ENCODE measurements at regions of chr14 and their contacts with region 1.

Region 1: DNA sequence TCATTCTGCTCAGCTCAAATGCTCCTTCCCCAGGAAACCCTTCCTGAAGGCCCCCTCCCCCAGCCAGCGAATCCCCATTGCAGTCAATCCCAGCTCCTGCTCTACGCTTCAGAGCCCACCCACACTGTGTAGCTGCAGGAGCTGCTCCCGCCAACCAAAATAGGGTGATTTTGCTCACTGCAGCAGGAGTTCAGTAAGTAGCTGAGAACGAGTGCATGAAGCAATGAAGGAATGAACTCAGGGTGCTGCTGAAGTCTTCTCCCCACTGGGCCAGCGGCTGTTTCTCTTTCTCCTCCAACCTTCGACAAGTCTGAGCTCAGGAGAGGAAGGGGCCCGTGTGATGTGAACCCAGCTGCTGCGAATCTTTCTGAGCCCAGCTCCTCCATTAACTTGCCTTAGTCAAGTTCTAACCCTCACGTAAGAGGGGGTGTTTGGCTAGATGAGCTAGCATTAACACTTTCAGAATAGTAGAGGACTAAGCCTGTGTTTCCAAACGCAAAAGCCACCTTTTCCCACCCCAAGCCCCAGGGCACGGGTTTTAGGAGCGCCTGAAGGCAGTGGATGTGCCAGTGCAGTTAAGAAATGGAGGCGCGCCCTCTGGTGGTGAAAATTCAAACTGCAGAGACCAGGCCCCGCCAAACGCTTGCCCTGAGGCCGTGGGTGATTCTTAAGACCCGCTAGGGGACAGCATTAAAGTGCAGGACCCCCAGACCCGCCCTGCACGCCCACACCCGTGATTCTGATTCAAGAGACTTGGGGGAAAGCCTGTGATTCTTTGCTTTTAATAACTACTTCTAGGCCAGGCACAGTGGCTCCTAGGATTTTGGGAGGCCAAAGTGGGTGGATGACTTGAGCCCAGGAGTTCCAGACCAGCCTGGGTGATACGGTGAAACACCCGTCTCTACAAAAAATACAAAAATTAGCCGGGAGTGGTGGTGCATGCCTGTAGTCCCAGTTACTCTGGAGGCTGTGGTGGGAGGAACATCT is 11.9 kb upstream of the SERPINA4 start:
- DNase-seq: peak; percentile 44 to 62
- ATAC-seq: peak; percentile 87 to 98
- H3K4me3 ChIP-seq: no peak overlapping the region
- H3K27ac ChIP-seq: peak overlapping the region; percentile 5 to 65; a peak in 2 of 6 replicates
- H3K4me1 ChIP-seq: no peaks in the 10 kb centered on the region
- CTCF ChIP-seq: peak; percentile 83
- EP300 ChIP-seq: no peak
- POLR2A ChIP-seq: no peak
- RAD21 ChIP-seq: peak; percentile 63 to 69

Region 2: GRCh38 chr14:94395888-94396574 is 153.3 kb before region 1 on chr14:
- CTCF ChIA-PET with region 1: no interaction called
- POLR2A ChIA-PET with region 1: no interaction called
- DNase-seq: peak in 1 of 2 experiments; percentile 17
- ATAC-seq: peak in 1 of 2 experiments; percentile 42; a peak in 2 of 6 replicates
- H3K4me3 ChIP-seq: no peak overlapping the region
- H3K27ac ChIP-seq: no peak overlapping the region
- H3K4me1 ChIP-seq: no peaks in the 10 kb centered on the region
- CTCF ChIP-seq: no peak
- EP300 ChIP-seq: no peak
- POLR2A ChIP-seq: no peak
- RAD21 ChIP-seq: no peak

Region 3: GRCh38 chr14:94536823-94537222 is 12.5 kb before region 1 on chr14:
- CTCF ChIA-PET with region 1: interaction called, 24 read pairs
- POLR2A ChIA-PET with region 1: interaction called, 3 read pairs
- DNase-seq: peak in 1 of 2 experiments; percentile 65
- ATAC-seq: peak in 1 of 2 experiments; percentile 83; a peak in 3 of 6 replicates
- H3K4me3 ChIP-seq: no peak overlapping the region
- H3K27ac ChIP-seq: no peak overlapping the region
- H3K4me1 ChIP-seq: no peaks in the 10 kb centered on the region; the same call in 2 of the 3 replicates
- CTCF ChIP-seq: no peak
- EP300 ChIP-seq: no peak
- POLR2A ChIP-seq: no peak
- RAD21 ChIP-seq: peak in 1 of 2 experiments; percentile 26; a peak in 1 of 5 replicates

Region 4: GRCh38 chr14:94559638-94560290 is 10.5 kb after region 1 on chr14:
- CTCF ChIA-PET with region 1: interaction called, 70 read pairs
- POLR2A ChIA-PET with region 1: no interaction called
- DNase-seq: no peak
- ATAC-seq: no peak
- H3K4me3 ChIP-seq: no peak overlapping the region
- H3K27ac ChIP-seq: no peak overlapping the region
- H3K4me1 ChIP-seq: no peaks in the 10 kb centered on the region
- CTCF ChIP-seq: no peak
- EP300 ChIP-seq: no peak
- POLR2A ChIP-seq: no peak
- RAD21 ChIP-seq: no peak

Region 5: DNA sequence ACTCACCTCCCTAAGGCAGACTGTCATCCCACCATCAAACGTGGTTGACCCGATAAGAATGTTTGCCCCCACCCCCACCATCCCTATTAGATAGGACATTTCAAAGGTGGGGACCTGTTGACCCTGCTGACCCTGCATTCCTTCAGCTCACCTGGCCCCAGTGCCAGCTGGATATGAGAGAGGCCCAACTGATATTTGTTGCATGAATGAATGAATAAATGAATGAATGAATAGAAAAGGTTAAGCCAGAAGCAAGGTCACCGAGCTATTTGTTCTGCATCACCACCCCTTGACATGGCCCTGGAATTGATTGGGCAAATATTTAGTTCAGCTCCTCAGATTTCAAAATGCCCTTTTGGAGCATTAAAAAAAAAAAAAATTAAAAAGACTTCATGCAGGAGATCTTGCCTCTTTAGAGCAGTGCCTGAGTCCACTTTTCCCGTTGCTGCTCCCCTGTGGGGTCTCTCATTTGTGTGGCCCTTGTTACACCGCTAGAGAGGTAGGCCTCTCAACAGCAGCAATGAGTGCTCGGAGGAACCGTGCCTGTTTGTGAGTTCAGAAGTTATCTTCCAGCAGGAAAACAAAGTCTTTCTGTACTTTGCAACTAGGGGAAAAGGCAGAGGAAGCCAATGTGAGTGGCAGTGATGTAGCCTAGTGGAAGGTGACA is 23.5 kb after region 1 on chr14:
- CTCF ChIA-PET with region 1: interaction called, 20 read pairs
- POLR2A ChIA-PET with region 1: no interaction called
- DNase-seq: no peak
- ATAC-seq: no peak
- H3K4me3 ChIP-seq: no peak overlapping the region
- H3K27ac ChIP-seq: no peak overlapping the region
- H3K4me1 ChIP-seq: no peaks in the 10 kb centered on the region
- CTCF ChIP-seq: no peak
- EP300 ChIP-seq: no peak
- POLR2A ChIP-seq: no peak
- RAD21 ChIP-seq: no peak

Region 6: DNA sequence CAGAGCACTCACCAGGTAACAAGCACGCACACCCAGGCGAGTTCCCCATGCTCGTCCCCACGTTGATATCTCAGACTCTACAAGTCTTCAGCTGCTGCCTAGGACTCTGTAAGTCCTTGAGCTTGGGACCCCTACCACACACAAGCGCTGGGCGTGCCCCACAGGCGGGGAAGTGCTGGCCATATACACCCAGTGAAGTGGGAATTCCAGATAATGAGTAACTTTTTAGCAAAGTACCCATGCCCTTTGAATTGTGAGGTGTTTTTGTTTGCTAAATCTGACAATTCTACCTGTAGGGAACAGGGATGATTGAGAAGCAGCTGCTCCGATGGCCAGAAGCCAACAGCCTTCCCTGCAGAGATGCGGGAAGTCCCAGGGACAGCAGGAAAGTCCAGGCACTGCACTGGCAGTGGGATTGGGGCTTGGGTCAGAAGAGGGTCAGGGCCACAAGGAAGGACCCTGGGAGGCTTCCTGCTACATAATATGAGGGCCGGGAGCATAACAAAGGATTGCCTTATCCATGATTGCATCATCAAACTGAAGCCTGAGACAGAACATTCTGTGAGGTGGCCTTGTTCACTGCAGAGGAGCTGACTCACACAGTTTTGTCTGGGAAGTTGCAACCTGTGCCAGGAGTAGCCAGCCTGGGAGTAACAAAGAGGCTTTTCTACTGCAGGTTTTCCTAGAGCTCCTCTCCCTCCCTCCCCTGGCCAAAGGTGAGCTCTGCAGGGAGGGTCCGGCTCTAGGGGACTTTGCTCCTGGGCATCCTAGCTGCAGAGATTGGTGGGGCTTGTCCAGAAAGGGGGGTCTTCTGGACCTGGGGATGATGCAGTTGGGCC is 49.7 kb after region 1 on chr14:
- CTCF ChIA-PET with region 1: interaction called, 10 read pairs
- POLR2A ChIA-PET with region 1: no interaction called
- DNase-seq: peak; percentile 87 to 98
- ATAC-seq: peak; percentile 78 to 88
- H3K4me3 ChIP-seq: 0 out of 3 replicates have a peak overlapping the region, but pooled peaks have one; percentile 7
- H3K27ac ChIP-seq: peak overlapping the region; percentile 97 to 98
- H3K4me1 ChIP-seq: peaks cover 74% of the 10 kb centered on the region
- CTCF ChIP-seq: peak; percentile 23; the same call in 2 of the 3 replicates
- EP300 ChIP-seq: peak; percentile 86 to 93
- POLR2A ChIP-seq: no peak
- RAD21 ChIP-seq: peak; percentile 28 to 50; a peak in 4 of 5 replicates

Region 7: GRCh38 chr14:94615823-94616570 is 66.7 kb after region 1 on chr14:
- CTCF ChIA-PET with region 1: interaction called, 11 read pairs
- POLR2A ChIA-PET with region 1: no interaction called
- DNase-seq: no peak
- ATAC-seq: no peak
- H3K4me3 ChIP-seq: no peak overlapping the region
- H3K27ac ChIP-seq: no peak overlapping the region
- H3K4me1 ChIP-seq: peaks cover 21% of the 10 kb centered on the region
- CTCF ChIP-seq: no peak
- EP300 ChIP-seq: no peak
- POLR2A ChIP-seq: no peak
- RAD21 ChIP-seq: no peak